CD8-positive, alpha-beta T cell (primary cell): ENCODE measurements at regions of chr6 and their contacts with region 1.

Region 1: GRCh38 chr6:13795041-13795750 is 19.2 kb downstream of the MCUR1 start:
- DNase-seq: peak; percentile 64 to 88 (median 81)
- ATAC-seq: peak; percentile 99
- H3K4me3 ChIP-seq: no peak overlapping the region
- H3K4me3 Mint-ChIP-seq: no peak overlapping the region
- H3K27ac ChIP-seq: no peak overlapping the region
- H3K27ac Mint-ChIP-seq: no peak overlapping the region
- H3K4me1 ChIP-seq: no peaks in the 10 kb centered on the region
- H3K4me1 Mint-ChIP-seq: peaks cover 6% of the 10 kb centered on the region
- H3K27me3 ChIP-seq: no peaks in the 10 kb centered on the region
- H3K27me3 Mint-ChIP-seq: no peaks in the 10 kb centered on the region
- CTCF ChIP-seq: peak; percentile 95

Region 2: GRCh38 chr6:12233693-12234571 is 1561.3 kb before region 1 on chr6:
- CTCF ChIA-PET with region 1: no interaction called
- POLR2A ChIA-PET with region 1: no interaction called
- intact Hi-C with region 1: no loop called
- DNase-seq: peak in 7 of 9 experiments; percentile 7 to 76 (median 34)
- ATAC-seq: peak; percentile 73
- H3K4me3 ChIP-seq: no peak overlapping the region
- H3K4me3 Mint-ChIP-seq: peak overlapping the region; percentile 6
- H3K27ac ChIP-seq: no peak overlapping the region
- H3K27ac Mint-ChIP-seq: no peak overlapping the region
- H3K4me1 ChIP-seq: peaks cover 14% of the 10 kb centered on the region
- H3K4me1 Mint-ChIP-seq: peaks cover 21% of the 10 kb centered on the region
- H3K27me3 ChIP-seq: no peaks in the 10 kb centered on the region
- H3K27me3 Mint-ChIP-seq: no peaks in the 10 kb centered on the region
- CTCF ChIP-seq: peak; percentile 79

Region 3: GRCh38 chr6:13668291-13668928 is 126.8 kb before region 1 on chr6:
- CTCF ChIA-PET with region 1: no interaction called
- POLR2A ChIA-PET with region 1: no interaction called
- intact Hi-C with region 1: no loop called
- DNase-seq: peak in 2 of 9 experiments; percentile 20 to 44
- ATAC-seq: no peak
- H3K4me3 ChIP-seq: no peak overlapping the region
- H3K4me3 Mint-ChIP-seq: no peak overlapping the region
- H3K27ac ChIP-seq: no peak overlapping the region
- H3K27ac Mint-ChIP-seq: peak overlapping the region; percentile 68
- H3K4me1 ChIP-seq: peaks cover 47% of the 10 kb centered on the region
- H3K4me1 Mint-ChIP-seq: peaks cover 90% of the 10 kb centered on the region
- H3K27me3 ChIP-seq: no peaks in the 10 kb centered on the region
- H3K27me3 Mint-ChIP-seq: no peaks in the 10 kb centered on the region
- CTCF ChIP-seq: no peak

Region 4: DNA sequence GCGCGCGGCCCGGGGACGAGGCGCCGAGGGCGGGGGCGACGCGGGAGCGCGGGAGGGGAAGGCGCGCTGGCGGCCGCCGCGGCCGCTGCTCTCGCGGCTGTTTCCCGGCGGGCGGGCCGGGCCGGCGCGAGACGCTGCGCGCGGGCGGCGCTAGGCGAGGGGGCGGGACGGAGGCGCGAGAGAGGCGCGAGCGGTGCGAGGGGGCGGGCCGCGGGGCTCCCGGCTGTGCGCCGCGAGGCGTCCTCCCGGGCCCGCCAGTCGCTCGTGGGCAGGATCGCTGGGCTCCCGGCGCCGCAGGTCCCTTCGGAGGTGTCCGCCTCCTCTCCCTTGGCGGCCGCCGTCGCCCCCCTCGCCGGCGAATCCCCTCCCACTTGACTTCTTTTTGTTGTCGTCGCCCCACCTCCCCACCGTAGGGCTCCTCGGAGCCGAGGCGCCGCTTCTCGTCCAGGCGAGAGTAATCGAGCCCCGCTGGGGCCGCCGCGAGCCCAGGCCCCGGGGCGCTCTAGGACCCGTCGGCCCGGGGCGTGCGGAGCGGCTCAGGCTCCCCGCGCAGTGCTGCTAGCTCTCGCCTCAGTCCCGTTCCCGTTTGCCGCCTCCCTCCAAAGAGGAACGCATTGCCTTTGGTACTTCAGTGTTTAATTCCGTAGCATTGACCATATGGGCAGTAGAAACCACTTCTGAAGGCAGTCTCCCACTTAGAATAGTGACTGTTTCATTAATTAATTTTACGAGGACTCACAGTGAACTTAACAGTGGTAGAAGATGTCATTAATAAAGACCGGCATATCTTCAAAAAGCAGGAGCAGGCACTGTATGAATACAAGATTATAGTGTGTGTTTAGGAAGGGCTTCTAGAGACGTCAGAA is 83.2 kb before region 1 on chr6 and contains the start of gene RANBP9:
- CTCF ChIA-PET with region 1: no interaction called
- POLR2A ChIA-PET with region 1: no interaction called
- intact Hi-C with region 1: no loop called
- DNase-seq: peak; percentile 76 to 94 (median 86)
- ATAC-seq: peak; percentile 82
- H3K4me3 ChIP-seq: peak within 1 kb of the TSS; percentile 77 to 81
- H3K4me3 Mint-ChIP-seq: peak within 1 kb of the TSS; percentile 93
- H3K27ac ChIP-seq: peak within 1 kb of the TSS; percentile 77 to 83
- H3K27ac Mint-ChIP-seq: peak within 1 kb of the TSS; percentile 97
- H3K4me1 ChIP-seq: peaks cover 22% of the 10 kb centered on the region
- H3K4me1 Mint-ChIP-seq: peaks cover 43% of the 10 kb centered on the region
- H3K27me3 ChIP-seq: no peaks in the 10 kb centered on the region
- H3K27me3 Mint-ChIP-seq: no peaks in the 10 kb centered on the region
- CTCF ChIP-seq: no peak
- total RNA-seq, gene RANBP9: 79.1 to 81.9 TPM

Region 5: GRCh38 chr6:13807696-13808095 is 12.5 kb after region 1 on chr6:
- CTCF ChIA-PET with region 1: interaction called, 24 read pairs
- POLR2A ChIA-PET with region 1: no interaction called
- intact Hi-C with region 1: no loop called
- DNase-seq: no peak
- ATAC-seq: no peak
- H3K4me3 ChIP-seq: no peak overlapping the region
- H3K4me3 Mint-ChIP-seq: no peak overlapping the region
- H3K27ac ChIP-seq: no peak overlapping the region
- H3K27ac Mint-ChIP-seq: no peak overlapping the region
- H3K4me1 ChIP-seq: peaks cover 3% of the 10 kb centered on the region
- H3K4me1 Mint-ChIP-seq: peaks cover 18% of the 10 kb centered on the region
- H3K27me3 ChIP-seq: no peaks in the 10 kb centered on the region
- H3K27me3 Mint-ChIP-seq: no peaks in the 10 kb centered on the region
- CTCF ChIP-seq: no peak

Region 6: DNA sequence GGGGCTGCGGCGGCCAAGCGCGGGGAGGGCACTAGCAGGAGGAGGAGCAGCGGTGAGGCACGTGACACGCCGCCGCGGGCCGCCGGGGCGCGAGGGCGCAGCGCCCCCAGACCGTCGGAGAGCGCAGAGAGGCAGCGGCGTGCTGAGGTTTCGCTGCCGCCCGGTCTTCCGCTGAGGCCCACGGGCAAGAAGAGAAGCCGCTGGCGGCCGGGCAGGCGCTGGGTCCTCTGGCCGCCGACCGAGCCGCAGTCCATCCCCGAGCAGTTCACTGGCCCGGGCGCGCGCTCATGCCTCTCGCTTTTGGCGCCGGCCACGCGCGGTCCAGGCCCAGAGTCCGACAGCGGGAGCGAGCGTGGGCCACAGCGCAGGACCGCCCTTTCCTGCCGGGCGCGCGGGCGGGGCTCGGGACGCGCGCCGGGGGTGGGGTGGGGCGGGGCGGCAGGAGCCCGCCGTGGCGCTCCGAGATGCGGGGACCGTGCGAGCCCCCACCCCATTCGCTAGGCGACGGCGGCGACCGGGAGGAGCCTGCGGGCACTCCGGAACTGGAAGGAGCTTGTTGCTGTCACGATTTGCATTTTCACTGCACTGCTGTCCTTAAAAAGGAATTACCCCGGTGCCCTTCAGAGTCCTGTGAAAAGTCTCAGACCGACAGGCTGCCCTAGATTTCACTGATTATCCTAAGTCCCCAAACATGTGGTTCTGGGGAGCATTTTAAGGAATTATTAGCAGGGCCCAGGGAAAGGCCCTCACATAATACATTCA is 19.2 kb after region 1 on chr6 and contains the start of gene MCUR1:
- CTCF ChIA-PET with region 1: interaction called, 24 read pairs
- POLR2A ChIA-PET with region 1: no interaction called
- intact Hi-C with region 1: loop called (anchors 1 to 2 kb)
- DNase-seq: peak; percentile 51 to 92 (median 74)
- ATAC-seq: peak; percentile 80
- H3K4me3 ChIP-seq: peak within 1 kb of the TSS; percentile 71
- H3K4me3 Mint-ChIP-seq: peak within 1 kb of the TSS; percentile 87
- H3K27ac ChIP-seq: peak within 1 kb of the TSS; percentile 61 to 76
- H3K27ac Mint-ChIP-seq: peak within 1 kb of the TSS; percentile 85
- H3K4me1 ChIP-seq: peaks cover 14% of the 10 kb centered on the region
- H3K4me1 Mint-ChIP-seq: peaks cover 34% of the 10 kb centered on the region
- H3K27me3 ChIP-seq: no peaks in the 10 kb centered on the region
- H3K27me3 Mint-ChIP-seq: no peaks in the 10 kb centered on the region
- CTCF ChIP-seq: no peak
- total RNA-seq, gene MCUR1: 2.1 to 3.4 TPM

Region 7: DNA sequence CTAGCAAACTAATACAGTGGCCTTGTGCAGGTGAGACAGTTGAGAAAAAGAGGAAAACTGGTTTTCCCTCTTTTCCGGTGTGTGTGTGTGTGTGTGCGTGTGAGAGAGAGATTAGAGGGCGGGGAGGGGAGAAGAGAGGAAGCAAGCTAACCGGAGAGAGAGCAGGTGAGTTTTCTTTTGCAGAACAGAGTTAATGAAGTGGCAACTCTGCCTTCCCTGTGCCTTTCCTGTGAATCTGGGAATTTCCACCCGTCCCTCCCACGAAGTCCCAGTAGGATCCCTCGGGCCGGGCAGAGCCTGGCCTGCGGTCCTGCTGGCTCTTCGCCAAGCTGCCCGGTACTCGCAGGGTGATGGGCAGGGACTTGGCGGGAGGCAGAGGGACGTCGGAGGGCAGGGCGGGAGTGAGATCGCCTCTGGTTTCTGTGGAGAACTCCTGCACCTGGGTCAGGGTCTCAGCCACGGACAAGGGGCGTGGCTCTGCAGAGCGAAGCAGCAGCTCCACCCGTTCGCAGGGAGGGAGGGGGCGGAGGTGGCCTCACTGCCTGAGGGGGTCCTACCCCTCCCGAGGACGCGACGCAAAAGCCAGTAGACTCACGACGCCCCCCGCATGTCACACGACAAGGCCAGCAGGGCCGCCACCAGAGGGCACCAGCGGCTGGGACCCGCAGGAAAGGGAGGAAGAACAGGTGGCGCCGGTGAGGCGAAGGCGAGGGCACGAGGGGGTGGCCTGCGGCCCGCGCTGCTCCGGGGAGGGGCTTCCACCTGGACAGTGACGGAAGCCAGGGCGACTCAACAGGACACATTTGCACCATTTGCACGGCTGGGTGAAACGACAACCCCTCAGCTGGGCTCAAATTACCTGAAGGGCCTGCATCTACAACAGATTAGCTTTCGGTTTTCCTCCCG is 78.3 kb after region 1 on chr6:
- CTCF ChIA-PET with region 1: interaction called, 6 read pairs
- POLR2A ChIA-PET with region 1: no interaction called
- intact Hi-C with region 1: loop called in 1 of 2 experiments (anchors 1 kb)
- DNase-seq: peak; percentile 47 to 84 (median 77)
- ATAC-seq: peak; percentile 93
- H3K4me3 ChIP-seq: peak overlapping the region; percentile 40 to 44
- H3K4me3 Mint-ChIP-seq: peak overlapping the region; percentile 83
- H3K27ac ChIP-seq: no peak overlapping the region
- H3K27ac Mint-ChIP-seq: no peak overlapping the region
- H3K4me1 ChIP-seq: peaks cover 7% of the 10 kb centered on the region
- H3K4me1 Mint-ChIP-seq: peaks cover 15% of the 10 kb centered on the region
- H3K27me3 ChIP-seq: no peaks in the 10 kb centered on the region
- H3K27me3 Mint-ChIP-seq: peaks cover under 1% of the 10 kb centered on the region
- CTCF ChIP-seq: peak; percentile 67

Region 8: GRCh38 chr6:14031516-14031915 is 236.3 kb after region 1 on chr6:
- CTCF ChIA-PET with region 1: no interaction called
- POLR2A ChIA-PET with region 1: no interaction called
- intact Hi-C with region 1: no loop called
- DNase-seq: no peak
- ATAC-seq: no peak
- H3K4me3 ChIP-seq: no peak overlapping the region
- H3K4me3 Mint-ChIP-seq: no peak overlapping the region
- H3K27ac ChIP-seq: no peak overlapping the region
- H3K27ac Mint-ChIP-seq: no peak overlapping the region
- H3K4me1 ChIP-seq: no peaks in the 10 kb centered on the region
- H3K4me1 Mint-ChIP-seq: no peaks in the 10 kb centered on the region
- H3K27me3 ChIP-seq: no peaks in the 10 kb centered on the region
- H3K27me3 Mint-ChIP-seq: peaks cover 26% of the 10 kb centered on the region
- CTCF ChIP-seq: no peak

Region 9: DNA sequence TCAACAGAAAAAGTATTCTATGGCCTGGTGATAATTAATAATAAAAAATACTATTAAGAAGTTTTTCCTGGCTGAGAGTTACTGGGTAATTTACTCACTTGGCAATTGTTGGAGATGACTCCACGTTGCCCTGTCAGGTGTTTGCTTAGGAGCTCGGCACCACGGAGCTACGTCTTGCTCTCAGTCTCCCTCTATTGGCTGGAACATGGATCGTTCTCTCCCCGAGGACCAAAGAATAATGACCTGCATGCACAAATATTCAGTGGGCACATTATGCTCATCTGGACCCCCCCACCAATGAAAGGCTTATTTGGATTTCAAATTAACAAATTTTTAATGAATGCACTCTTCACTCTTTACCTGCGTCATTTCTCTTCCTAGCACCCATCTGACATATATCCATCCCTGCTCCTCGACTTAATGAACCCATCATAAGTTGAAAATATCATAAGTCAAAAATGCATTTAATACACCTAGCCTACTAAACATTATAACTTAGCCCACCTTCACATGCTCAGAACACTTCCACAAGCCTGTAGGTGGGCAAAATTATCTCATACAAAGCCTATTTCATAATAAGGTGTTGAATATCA is 251.4 kb after region 1 on chr6:
- CTCF ChIA-PET with region 1: interaction called, 12 read pairs
- POLR2A ChIA-PET with region 1: no interaction called
- intact Hi-C with region 1: loop called (anchors 1 kb)
- DNase-seq: peak in 7 of 9 experiments; percentile 9 to 68 (median 33)
- ATAC-seq: peak; percentile 83
- H3K4me3 ChIP-seq: no peak overlapping the region
- H3K4me3 Mint-ChIP-seq: no peak overlapping the region
- H3K27ac ChIP-seq: no peak overlapping the region
- H3K27ac Mint-ChIP-seq: no peak overlapping the region
- H3K4me1 ChIP-seq: no peaks in the 10 kb centered on the region
- H3K4me1 Mint-ChIP-seq: peaks cover 1% of the 10 kb centered on the region
- H3K27me3 ChIP-seq: no peaks in the 10 kb centered on the region
- H3K27me3 Mint-ChIP-seq: peaks cover 31% of the 10 kb centered on the region
- CTCF ChIP-seq: peak; percentile 60

Region 10: GRCh38 chr6:14144678-14145113 is 349.5 kb after region 1 on chr6:
- CTCF ChIA-PET with region 1: interaction called, 3 read pairs
- POLR2A ChIA-PET with region 1: no interaction called
- intact Hi-C with region 1: loop called (anchors 1 to 2 kb)
- DNase-seq: peak; percentile 43 to 81 (median 75)
- ATAC-seq: peak; percentile 95
- H3K4me3 ChIP-seq: no peak overlapping the region
- H3K4me3 Mint-ChIP-seq: no peak overlapping the region
- H3K27ac ChIP-seq: no peak overlapping the region
- H3K27ac Mint-ChIP-seq: no peak overlapping the region
- H3K4me1 ChIP-seq: peaks cover 4% of the 10 kb centered on the region
- H3K4me1 Mint-ChIP-seq: no peaks in the 10 kb centered on the region
- H3K27me3 ChIP-seq: no peaks in the 10 kb centered on the region
- H3K27me3 Mint-ChIP-seq: no peaks in the 10 kb centered on the region
- CTCF ChIP-seq: peak; percentile 95

Region 11: DNA sequence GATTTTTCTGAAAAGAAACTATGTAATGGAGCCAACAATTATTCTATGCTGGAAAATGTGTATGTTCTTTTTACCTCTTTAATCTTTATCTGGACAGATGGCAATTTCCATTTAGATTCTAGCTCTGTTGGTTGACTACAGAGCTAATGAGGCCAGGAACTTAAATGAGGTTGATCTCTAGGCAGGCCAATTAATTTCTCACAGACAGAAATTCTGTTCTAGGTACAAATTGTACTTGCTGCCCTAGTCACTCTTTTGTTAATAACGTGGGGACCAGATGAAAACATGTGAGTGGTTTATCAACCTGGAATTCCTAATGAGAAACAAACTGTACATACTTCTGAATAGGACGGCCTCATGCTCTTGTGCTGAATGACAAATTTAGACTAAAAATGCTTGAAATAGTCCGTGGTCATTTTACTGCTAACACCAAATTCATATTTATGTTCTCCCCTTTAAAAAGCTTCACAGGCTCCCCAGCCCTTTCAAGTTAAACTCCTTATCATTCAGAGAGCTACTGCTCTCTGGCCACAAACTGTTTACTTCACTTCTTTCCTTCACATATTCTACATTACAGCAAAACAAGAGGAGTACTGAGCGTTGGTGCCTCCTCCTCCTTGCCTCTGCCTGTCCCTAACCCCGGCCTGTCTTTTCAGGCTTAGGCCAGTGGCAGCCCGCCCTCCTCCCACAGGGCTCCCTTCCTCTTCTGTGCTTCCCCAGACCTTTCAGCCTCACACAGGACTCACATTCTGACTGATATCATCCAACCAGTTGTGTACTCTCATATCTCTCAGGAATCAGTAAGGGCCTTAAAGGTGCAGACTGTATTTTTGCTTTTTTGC is 1826.2 kb after region 1 on chr6:
- CTCF ChIA-PET with region 1: no interaction called
- POLR2A ChIA-PET with region 1: no interaction called
- intact Hi-C with region 1: loop called in 1 of 2 experiments (anchors 5 kb)
- DNase-seq: peak in 1 of 9 experiments; percentile 12
- ATAC-seq: no peak
- H3K4me3 ChIP-seq: no peak overlapping the region
- H3K4me3 Mint-ChIP-seq: no peak overlapping the region
- H3K27ac ChIP-seq: no peak overlapping the region
- H3K27ac Mint-ChIP-seq: no peak overlapping the region
- H3K4me1 ChIP-seq: peaks cover 11% of the 10 kb centered on the region
- H3K4me1 Mint-ChIP-seq: peaks cover 47% of the 10 kb centered on the region
- H3K27me3 ChIP-seq: no peaks in the 10 kb centered on the region
- H3K27me3 Mint-ChIP-seq: no peaks in the 10 kb centered on the region
- CTCF ChIP-seq: no peak